Mammary epithelial cell (primary cell): ENCODE measurements at regions of chr17 and their contacts with region 1.

Region 1: GRCh38 chr17:40139566-40140058 is 725 bp upstream of the CASC3 start:
- DNase-seq: no peak
- H3K4me3 ChIP-seq: peak overlapping the region; percentile 55 to 63 (median 55)
- H3K27ac ChIP-seq: peak overlapping the region; percentile 73
- H3K4me1 ChIP-seq: peaks cover 17% of the 10 kb centered on the region
- H3K27me3 ChIP-seq: no peaks in the 10 kb centered on the region
- CTCF ChIP-seq: no peak

Region 2: DNA sequence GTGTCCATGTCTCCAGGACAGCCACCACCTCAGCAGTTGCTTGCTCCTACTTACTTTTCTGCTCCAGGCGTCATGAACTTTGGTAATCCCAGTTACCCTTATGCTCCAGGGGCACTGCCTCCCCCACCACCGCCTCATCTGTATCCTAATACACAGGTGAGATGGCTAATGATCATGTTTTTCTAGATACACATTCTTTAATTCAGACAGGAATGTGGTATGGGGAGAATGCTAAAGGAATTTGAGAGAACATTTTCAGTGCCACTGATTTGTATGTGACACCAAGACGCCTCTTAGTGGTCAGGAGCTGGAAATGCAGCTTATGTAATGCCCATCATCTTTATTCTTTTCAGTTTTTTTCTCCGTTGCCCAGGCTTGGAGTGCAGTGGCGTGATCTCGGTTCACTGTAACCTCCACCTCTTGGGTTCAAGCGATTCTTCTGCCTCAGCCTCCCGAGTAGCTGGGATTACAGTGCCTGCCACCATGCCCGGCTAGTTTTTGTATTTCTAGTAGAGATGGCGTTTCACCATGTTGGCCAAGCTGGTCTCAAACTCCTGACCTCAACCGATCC is 28.7 kb after region 1 on chr17:
- CTCF ChIA-PET with region 1: no interaction called
- dilution Hi-C with region 1: no loop called
- in situ Hi-C with region 1: no loop called
- intact Hi-C with region 1: loop called (anchors 1 kb)
- DNase-seq: peak; percentile 49
- H3K4me3 ChIP-seq: no peak overlapping the region
- H3K27ac ChIP-seq: no peak overlapping the region
- H3K4me1 ChIP-seq: peaks cover 3% of the 10 kb centered on the region
- H3K27me3 ChIP-seq: no peaks in the 10 kb centered on the region
- CTCF ChIP-seq: peak; percentile 75 to 80